Calu3 (cell line): ENCODE measurements at regions of chr17 and their contacts with region 1.

Region 1: DNA sequence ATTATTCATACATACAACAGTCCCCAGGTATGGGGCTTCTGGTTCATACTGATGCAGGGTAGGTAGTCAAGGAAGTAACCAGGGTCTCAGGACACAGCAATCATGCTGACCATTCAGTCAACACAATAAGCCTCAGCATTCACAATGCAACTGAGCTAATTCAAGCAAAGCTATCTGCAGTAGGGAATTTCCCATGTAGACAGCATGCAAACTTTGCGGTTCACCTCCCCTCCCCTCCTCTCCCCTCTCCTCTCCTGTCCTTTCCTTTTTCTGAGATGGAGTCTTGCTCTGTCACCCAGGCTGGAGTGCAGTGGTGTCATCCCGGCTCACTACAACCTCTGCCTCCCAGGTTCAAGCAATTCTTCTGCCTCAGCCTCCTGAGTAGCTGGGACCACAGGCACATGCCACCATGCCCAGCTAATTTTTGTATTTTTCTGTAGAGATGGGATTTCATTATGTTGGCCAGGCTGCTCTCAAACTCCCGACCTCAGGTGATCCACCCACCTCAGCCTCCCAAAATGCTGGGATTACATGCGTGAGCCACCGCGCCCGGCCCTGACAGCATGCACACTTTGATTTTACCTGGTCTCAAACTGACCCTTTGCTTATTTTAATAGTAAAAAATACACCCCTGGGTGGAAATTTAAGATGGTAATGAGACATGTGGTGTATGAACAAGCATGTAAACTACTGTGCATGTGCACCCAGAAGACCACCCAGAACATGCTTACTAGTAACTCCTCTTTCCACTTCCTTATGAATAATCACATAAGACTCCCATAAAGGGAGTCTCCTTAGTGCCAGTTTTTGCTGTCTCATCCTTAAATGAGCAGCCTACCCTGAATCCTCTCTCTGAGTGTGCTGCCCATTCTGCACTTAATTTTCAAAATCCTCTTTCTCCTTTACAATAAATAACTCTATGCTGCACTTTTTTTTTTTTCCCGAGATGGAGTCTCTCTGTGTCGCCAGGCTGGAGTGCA is 9.3 kb upstream of the RNF135 start:
- DNase-seq: no peak
- H3K4me3 Mint-ChIP-seq: no peak overlapping the region
- H3K27ac Mint-ChIP-seq: no peak overlapping the region
- H3K4me1 Mint-ChIP-seq: no peaks in the 10 kb centered on the region
- H3K27me3 Mint-ChIP-seq: peaks cover 25% of the 10 kb centered on the region
- CTCF ChIP-seq: no peak

Region 2: GRCh38 chr17:29645515-29646051 is 1315.9 kb before region 1 on chr17:
- CTCF ChIA-PET with region 1: interaction called, 10 read pairs
- intact Hi-C with region 1: no loop called
- DNase-seq: no peak
- H3K4me3 Mint-ChIP-seq: no peak overlapping the region
- H3K27ac Mint-ChIP-seq: no peak overlapping the region
- H3K4me1 Mint-ChIP-seq: no peaks in the 10 kb centered on the region
- H3K27me3 Mint-ChIP-seq: no peaks in the 10 kb centered on the region
- CTCF ChIP-seq: no peak

Region 3: GRCh38 chr17:30992551-30992950 is 31.1 kb after region 1 on chr17:
- CTCF ChIA-PET with region 1: no interaction called
- intact Hi-C with region 1: no loop called
- DNase-seq: no peak
- H3K4me3 Mint-ChIP-seq: no peak overlapping the region
- H3K27ac Mint-ChIP-seq: no peak overlapping the region
- H3K4me1 Mint-ChIP-seq: peaks cover 8% of the 10 kb centered on the region
- H3K27me3 Mint-ChIP-seq: no peaks in the 10 kb centered on the region
- CTCF ChIP-seq: no peak